B cell (primary cell): ENCODE measurements at regions of chr19 and their contacts with region 1.

Region 1: DNA sequence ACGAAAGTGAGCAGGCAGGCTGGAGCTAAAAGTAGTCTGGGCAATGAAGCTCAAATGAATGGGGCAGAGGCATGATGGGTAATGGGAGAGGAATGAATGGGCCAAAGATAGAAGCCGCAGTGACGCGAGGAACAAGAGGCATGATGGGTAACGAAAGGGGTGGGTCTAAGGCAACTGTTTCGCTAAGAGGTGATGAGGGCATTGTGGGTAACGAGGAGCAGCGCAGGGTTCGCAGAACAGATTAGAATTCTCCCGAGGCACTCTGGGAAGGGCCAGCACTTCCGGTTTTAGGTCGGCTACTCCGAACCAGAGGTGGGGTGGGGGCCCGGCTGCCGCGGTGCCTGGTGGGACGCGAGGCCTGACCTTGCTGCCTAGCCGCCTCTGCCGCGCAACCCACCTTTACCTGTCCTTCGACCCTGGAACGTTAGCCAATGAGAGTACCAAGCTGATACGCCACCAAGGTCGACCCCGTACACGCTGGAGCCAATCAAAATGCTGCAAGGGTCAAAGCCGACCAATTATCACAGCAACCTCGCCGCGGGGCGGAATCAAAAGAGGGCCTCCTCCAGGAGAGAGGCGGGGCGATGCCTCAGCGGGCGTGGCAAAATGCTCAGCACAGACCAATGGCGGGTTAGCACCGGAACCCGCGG is 563 bp upstream of the TOMM40 start:
- DNase-seq: peak; percentile 100
- ATAC-seq: peak; percentile 78
- H3K4me3 ChIP-seq: peak overlapping the region; percentile 65 to 90 (median 73)
- H3K4me3 Mint-ChIP-seq: peak overlapping the region; percentile 92
- H3K27ac ChIP-seq: peak overlapping the region; percentile 87 to 98
- H3K27ac Mint-ChIP-seq: peak overlapping the region; percentile 94
- H3K4me1 ChIP-seq: peaks cover 16 to 21% of the 10 kb centered on the region in 2 donors
- H3K4me1 Mint-ChIP-seq: peaks cover 29% of the 10 kb centered on the region
- H3K27me3 ChIP-seq: no peaks in the 10 kb centered on the region
- H3K27me3 Mint-ChIP-seq: no peaks in the 10 kb centered on the region
- CTCF ChIP-seq: no peak

Region 2: DNA sequence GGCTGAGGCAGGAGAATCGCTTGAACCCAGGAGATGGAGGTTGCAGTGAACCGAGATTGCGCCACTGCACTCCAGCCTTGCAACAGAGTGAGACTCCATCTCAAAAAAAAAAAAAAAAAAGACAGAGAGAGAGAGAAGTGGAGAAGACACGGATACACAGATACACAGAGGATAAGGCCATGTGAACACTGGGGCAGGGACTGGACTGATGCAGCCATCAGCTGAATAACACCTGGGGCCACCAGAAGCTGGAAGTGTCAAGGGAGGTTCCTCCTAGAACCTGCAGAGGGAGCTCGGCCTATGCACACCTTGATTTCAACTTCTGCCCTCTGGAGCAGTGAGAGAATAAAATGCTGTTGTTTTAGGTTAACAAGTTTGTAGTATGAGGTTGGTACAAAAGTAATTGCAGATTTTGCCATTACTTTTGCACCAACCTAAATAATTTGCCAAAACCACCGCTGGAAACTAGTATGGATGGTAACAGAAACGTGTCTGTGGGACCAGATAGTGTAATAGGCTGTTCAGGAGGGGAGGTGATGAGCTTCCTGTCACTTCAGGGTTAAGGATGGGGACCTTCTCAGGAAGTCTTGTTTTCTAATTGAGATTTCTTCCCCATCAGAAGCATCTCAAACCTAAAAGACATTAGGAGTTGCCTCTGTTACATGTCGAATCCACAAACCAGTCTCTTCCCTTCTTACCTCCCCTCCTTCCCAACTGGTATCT is 313.5 kb before region 1 on chr19:
- CTCF ChIA-PET with region 1: no interaction called
- POLR2A ChIA-PET with region 1: no interaction called
- intact Hi-C with region 1: no loop called
- DNase-seq: peak; percentile 33
- ATAC-seq: no peak
- H3K4me3 ChIP-seq: no peak overlapping the region
- H3K4me3 Mint-ChIP-seq: no peak overlapping the region
- H3K27ac ChIP-seq: no peak overlapping the region
- H3K27ac Mint-ChIP-seq: no peak overlapping the region
- H3K4me1 ChIP-seq: no peaks in the 10 kb centered on the region
- H3K4me1 Mint-ChIP-seq: no peaks in the 10 kb centered on the region
- H3K27me3 ChIP-seq: no peaks in the 10 kb centered on the region
- H3K27me3 Mint-ChIP-seq: peaks cover 6% of the 10 kb centered on the region
- CTCF ChIP-seq: peak; percentile 41

Region 3: DNA sequence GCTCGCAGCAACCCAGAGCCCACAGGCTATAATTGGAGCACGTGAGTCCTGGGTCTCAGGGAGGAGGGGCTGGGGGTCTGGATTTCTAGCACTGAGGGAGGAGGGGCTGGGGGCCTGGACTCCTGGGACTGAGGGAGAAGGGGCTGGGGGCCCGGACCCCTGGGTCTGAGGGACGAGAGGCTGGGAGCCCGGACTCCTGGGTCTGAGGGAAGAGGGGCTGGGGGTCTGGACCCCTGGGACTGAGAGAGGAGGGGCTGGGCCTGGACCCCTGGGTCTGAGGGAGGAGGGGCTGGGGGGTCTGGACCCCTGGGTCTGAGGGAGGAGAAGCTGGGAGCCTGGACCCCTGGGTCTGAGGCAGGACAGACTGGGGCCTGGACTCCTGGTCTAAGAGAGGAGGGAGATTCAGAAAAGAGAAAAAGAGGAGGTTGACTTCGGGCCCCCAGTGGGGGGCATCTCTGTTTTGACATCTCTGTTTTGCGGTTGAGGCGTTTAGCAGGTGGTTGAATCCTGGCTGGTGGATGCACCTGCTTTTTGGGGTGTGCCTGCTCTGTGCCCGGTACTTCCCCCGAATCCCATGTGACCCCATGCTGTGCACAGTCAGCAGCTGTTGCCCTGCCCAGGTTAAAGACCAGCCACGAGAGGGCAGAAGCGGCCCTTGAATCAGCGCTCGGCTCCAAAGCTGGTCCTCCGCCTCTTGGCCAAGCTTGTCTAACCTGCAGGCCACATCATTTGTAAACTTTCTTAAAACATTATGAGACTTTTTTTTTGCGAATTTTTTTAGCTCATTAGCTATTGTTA is 236.3 kb before region 1 on chr19:
- CTCF ChIA-PET with region 1: interaction called, 5 read pairs
- POLR2A ChIA-PET with region 1: no interaction called
- intact Hi-C with region 1: loop called (anchors 1 kb)
- DNase-seq: peak; percentile 94
- ATAC-seq: peak; percentile 97
- H3K4me3 ChIP-seq: no peak overlapping the region
- H3K4me3 Mint-ChIP-seq: no peak overlapping the region
- H3K27ac ChIP-seq: peak overlapping the region; percentile 52 to 65
- H3K27ac Mint-ChIP-seq: peak overlapping the region; percentile 80
- H3K4me1 ChIP-seq: peaks cover 7 to 18% of the 10 kb centered on the region in 2 donors
- H3K4me1 Mint-ChIP-seq: peaks cover 18% of the 10 kb centered on the region
- H3K27me3 ChIP-seq: no peaks in the 10 kb centered on the region
- H3K27me3 Mint-ChIP-seq: peaks cover 6% of the 10 kb centered on the region
- CTCF ChIP-seq: peak; percentile 79

Region 4: GRCh38 chr19:44770550-44771257 is 119.8 kb before region 1 on chr19:
- CTCF ChIA-PET with region 1: no interaction called
- POLR2A ChIA-PET with region 1: interaction called, 6 read pairs
- intact Hi-C with region 1: loop called (anchors 1 kb)
- DNase-seq: peak; percentile 98
- ATAC-seq: peak; percentile 100
- H3K4me3 ChIP-seq: peak overlapping the region in 3 of 5 experiments; percentile 8 to 32 (median 18)
- H3K4me3 Mint-ChIP-seq: peak overlapping the region; percentile 63
- H3K27ac ChIP-seq: no peak overlapping the region
- H3K27ac Mint-ChIP-seq: peak overlapping the region; percentile 74
- H3K4me1 ChIP-seq: peaks cover 8 to 20% of the 10 kb centered on the region in 2 donors
- H3K4me1 Mint-ChIP-seq: peaks cover 28% of the 10 kb centered on the region
- H3K27me3 ChIP-seq: no peaks in the 10 kb centered on the region
- H3K27me3 Mint-ChIP-seq: no peaks in the 10 kb centered on the region
- CTCF ChIP-seq: peak; percentile 76

Region 5: DNA sequence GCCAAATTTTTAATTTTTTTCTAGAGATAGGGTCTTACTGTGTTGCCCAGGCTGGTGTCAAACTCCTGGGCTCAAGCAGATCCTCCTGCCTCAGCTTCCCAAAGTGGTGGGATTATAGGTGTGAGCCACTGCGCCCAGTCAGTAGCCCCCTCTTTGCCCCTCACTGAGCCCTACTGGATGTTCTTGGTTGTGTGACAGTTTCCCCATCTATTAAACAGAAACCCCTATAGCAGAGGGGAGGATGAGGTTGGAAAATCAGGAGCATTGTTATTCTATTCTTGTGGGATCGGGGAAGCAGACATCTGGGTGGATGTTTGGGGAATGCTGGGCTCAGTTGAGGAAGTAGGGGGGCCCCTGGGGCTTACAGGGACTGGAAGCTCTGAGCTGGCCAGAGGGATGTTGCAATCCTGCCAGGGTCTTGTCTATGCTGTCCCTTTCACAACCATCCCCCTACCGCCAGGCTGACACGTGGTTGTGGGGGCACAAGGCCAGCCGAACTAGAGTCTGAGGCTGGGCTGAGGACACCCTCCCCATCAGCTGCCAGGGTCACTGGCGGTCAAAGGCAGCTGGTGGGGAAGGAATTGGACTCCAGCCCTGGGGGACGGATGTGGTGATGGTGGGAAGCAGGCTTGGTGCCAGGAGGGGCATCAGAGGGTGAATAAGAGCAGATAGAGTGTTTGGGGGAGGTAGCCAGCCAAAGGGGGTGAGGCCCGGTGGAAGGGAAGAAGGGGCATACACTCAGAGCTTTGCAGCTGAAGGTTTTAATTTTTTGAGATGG is 34.8 kb after region 1 on chr19:
- CTCF ChIA-PET with region 1: no interaction called
- POLR2A ChIA-PET with region 1: no interaction called
- intact Hi-C with region 1: no loop called
- DNase-seq: no peak
- ATAC-seq: no peak
- H3K4me3 ChIP-seq: no peak overlapping the region
- H3K4me3 Mint-ChIP-seq: no peak overlapping the region
- H3K27ac ChIP-seq: no peak overlapping the region
- H3K27ac Mint-ChIP-seq: no peak overlapping the region
- H3K4me1 ChIP-seq: peaks cover 4 to 8% of the 10 kb centered on the region in 2 donors
- H3K4me1 Mint-ChIP-seq: peaks cover 6% of the 10 kb centered on the region
- H3K27me3 ChIP-seq: peaks cover 0 to 10% (median 5%) of the 10 kb centered on the region in 4 experiments
- H3K27me3 Mint-ChIP-seq: peaks cover 18% of the 10 kb centered on the region
- CTCF ChIP-seq: no peak

Region 6: GRCh38 chr19:44939668-44940067 is 49.2 kb after region 1 on chr19:
- CTCF ChIA-PET with region 1: no interaction called
- POLR2A ChIA-PET with region 1: no interaction called
- intact Hi-C with region 1: no loop called
- DNase-seq: no peak
- ATAC-seq: no peak
- H3K4me3 ChIP-seq: no peak overlapping the region
- H3K4me3 Mint-ChIP-seq: no peak overlapping the region
- H3K27ac ChIP-seq: no peak overlapping the region
- H3K27ac Mint-ChIP-seq: no peak overlapping the region
- H3K4me1 ChIP-seq: peaks cover 4 to 11% of the 10 kb centered on the region in 2 donors
- H3K4me1 Mint-ChIP-seq: peaks cover 12% of the 10 kb centered on the region
- H3K27me3 ChIP-seq: no peaks in the 10 kb centered on the region
- H3K27me3 Mint-ChIP-seq: no peaks in the 10 kb centered on the region
- CTCF ChIP-seq: no peak

Region 7: GRCh38 chr19:44954824-44955586 is 64.5 kb after region 1 on chr19 and contains the start of gene CLPTM1:
- CTCF ChIA-PET with region 1: interaction called, 6 read pairs
- POLR2A ChIA-PET with region 1: interaction called, 7 read pairs
- intact Hi-C with region 1: loop called (anchors 1 kb)
- DNase-seq: peak; percentile 98
- ATAC-seq: peak; percentile 88
- H3K4me3 ChIP-seq: peak within 1 kb of the TSS; percentile 96 to 100 (median 98)
- H3K4me3 Mint-ChIP-seq: peak within 1 kb of the TSS; percentile 99
- H3K27ac ChIP-seq: peak within 1 kb of the TSS; percentile 90 to 93
- H3K27ac Mint-ChIP-seq: peak within 1 kb of the TSS; percentile 94
- H3K4me1 ChIP-seq: peaks cover 48 to 57% of the 10 kb centered on the region in 2 donors
- H3K4me1 Mint-ChIP-seq: peaks cover 58% of the 10 kb centered on the region
- H3K27me3 ChIP-seq: no peaks in the 10 kb centered on the region
- H3K27me3 Mint-ChIP-seq: no peaks in the 10 kb centered on the region
- CTCF ChIP-seq: no peak
- total RNA-seq, gene CLPTM1: 121 and 123 TPM in 2 replicates

Region 8: DNA sequence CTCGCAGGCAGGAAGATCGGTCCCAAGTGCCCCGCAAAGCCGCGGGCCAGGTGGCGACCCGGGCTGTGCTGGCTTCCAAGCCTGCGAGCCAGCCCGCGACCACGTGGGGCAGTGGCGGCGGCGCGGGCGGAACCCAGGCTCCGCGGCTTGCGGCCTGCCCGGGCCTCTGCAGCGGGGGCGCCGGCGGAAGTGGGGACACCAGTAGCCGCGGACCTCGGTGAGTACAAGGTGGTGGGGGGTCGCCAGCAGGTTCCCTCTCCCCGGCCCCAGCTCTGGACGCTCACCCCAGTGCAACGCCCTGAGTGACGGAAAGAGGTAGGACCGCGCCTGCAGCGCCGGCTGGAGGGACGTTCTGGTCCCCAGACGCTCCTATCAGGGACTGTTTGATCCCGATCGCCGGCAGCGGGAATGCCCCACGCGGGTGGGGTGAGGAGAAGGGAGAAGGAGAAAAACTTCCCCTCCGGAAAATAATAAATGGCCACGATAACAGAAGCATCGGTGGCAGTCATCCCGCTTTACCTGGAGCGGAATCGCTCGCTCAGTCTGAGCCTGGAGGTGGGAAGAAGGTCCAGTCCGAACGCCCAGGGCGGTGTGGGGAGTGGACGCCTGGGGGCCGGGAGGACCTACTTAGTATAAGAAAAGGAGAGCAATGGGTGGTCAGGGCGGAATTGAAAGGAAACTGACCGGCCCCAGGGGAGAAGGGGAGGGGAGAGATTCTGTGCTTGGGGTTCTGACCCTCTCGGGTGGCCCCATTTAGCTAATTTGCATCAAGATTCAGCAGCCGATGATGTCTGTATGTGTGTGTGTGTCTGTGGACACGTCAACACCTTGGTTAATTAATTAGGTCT is 188.8 kb after region 1 on chr19 and contains the start of gene GEMIN7:
- CTCF ChIA-PET with region 1: no interaction called
- POLR2A ChIA-PET with region 1: no interaction called
- intact Hi-C with region 1: loop called (anchors 1 kb)
- DNase-seq: peak; percentile 86
- ATAC-seq: peak; percentile 15
- H3K4me3 ChIP-seq: peak within 1 kb of the TSS; percentile 71 to 98 (median 77)
- H3K4me3 Mint-ChIP-seq: peak within 1 kb of the TSS; percentile 98
- H3K27ac ChIP-seq: peak within 1 kb of the TSS; percentile 62 to 92
- H3K27ac Mint-ChIP-seq: peak within 1 kb of the TSS; percentile 94
- H3K4me1 ChIP-seq: peaks cover 40 to 49% of the 10 kb centered on the region in 2 donors
- H3K4me1 Mint-ChIP-seq: peaks cover 53% of the 10 kb centered on the region
- H3K27me3 ChIP-seq: no peaks in the 10 kb centered on the region
- H3K27me3 Mint-ChIP-seq: no peaks in the 10 kb centered on the region
- CTCF ChIP-seq: peak; percentile 11
- total RNA-seq, gene GEMIN7: 38.2 and 43.0 TPM in 2 replicates

Region 9: GRCh38 chr19:45178262-45179071 is 288.0 kb after region 1 on chr19 and contains the start of gene BLOC1S3:
- CTCF ChIA-PET with region 1: no interaction called
- POLR2A ChIA-PET with region 1: no interaction called
- intact Hi-C with region 1: loop called (anchors 1 kb)
- DNase-seq: peak; percentile 100
- ATAC-seq: peak; percentile 88
- H3K4me3 ChIP-seq: peak within 1 kb of the TSS; percentile 93 to 99 (median 95)
- H3K4me3 Mint-ChIP-seq: peak within 1 kb of the TSS; percentile 95
- H3K27ac ChIP-seq: peak within 1 kb of the TSS; percentile 86 to 91
- H3K27ac Mint-ChIP-seq: peak within 1 kb of the TSS; percentile 96
- H3K4me1 ChIP-seq: peaks cover 24 to 35% of the 10 kb centered on the region in 2 donors
- H3K4me1 Mint-ChIP-seq: peaks cover 39% of the 10 kb centered on the region
- H3K27me3 ChIP-seq: no peaks in the 10 kb centered on the region
- H3K27me3 Mint-ChIP-seq: no peaks in the 10 kb centered on the region
- CTCF ChIP-seq: peak; percentile 38
- total RNA-seq, gene BLOC1S3: 21.1 and 31.8 TPM in 2 replicates

Region 10: DNA sequence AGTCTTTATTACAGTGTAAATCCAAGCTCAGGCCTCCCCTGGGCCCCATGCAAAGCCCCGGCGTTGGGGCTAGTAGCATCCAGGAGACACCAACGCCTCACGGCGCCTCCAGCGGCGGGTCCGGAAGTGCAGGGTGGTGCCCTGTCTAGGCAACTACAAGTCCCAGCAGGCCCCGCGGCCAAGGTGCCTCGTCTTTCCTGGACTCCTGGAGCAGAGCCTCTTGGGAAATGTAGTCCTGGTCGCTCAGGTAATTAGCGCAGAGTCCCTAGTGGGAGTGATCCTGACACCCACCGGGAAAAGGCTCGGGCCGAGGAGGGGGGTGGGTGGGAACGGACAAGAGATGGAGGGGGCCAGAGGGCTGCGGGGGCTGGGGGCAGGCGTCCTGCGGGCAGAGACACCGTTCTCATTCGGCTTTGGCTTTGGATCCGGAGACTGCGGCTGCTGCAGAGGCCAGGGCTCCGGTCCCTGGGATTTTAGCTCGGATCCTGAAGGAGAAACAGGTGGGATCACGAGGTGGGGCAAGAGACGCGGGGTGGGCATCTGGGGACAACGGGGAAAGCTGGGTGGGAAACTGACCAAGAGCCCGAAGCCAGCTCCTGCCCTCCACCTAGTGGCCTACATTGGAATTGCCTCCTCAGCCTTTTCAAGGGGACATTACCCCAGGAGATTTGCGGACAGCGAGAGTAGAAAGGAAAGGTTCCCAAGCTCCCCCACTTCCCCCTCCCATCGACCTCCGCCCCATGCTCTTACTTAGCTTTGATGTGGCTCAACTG is 595.0 kb after region 1 on chr19:
- CTCF ChIA-PET with region 1: no interaction called
- POLR2A ChIA-PET with region 1: interaction called, 10 read pairs
- intact Hi-C with region 1: no loop called
- DNase-seq: peak; percentile 96
- ATAC-seq: peak; percentile 99
- H3K4me3 ChIP-seq: peak overlapping the region; percentile 38 to 80 (median 63)
- H3K4me3 Mint-ChIP-seq: peak overlapping the region; percentile 95
- H3K27ac ChIP-seq: no peak overlapping the region
- H3K27ac Mint-ChIP-seq: peak overlapping the region; percentile 76
- H3K4me1 ChIP-seq: peaks cover 3 to 9% of the 10 kb centered on the region in 2 donors
- H3K4me1 Mint-ChIP-seq: peaks cover 11% of the 10 kb centered on the region
- H3K27me3 ChIP-seq: no peaks in the 10 kb centered on the region
- H3K27me3 Mint-ChIP-seq: no peaks in the 10 kb centered on the region
- CTCF ChIP-seq: peak; percentile 92